HepG2 (cell line): ENCODE measurements at regions of chr17 and their contacts with region 1.

Region 1: GRCh38 chr17:17859909-17860765 is 23.4 kb upstream of the SREBF1 start:
- DNase-seq: peak; percentile 57
- ATAC-seq: peak; percentile 88
- H3K4me3 ChIP-seq: no peak overlapping the region
- H3K27ac ChIP-seq: no peak overlapping the region
- H3K4me1 ChIP-seq: peaks cover 44% of the 10 kb centered on the region
- H3K27me3 ChIP-seq: no peaks in the 10 kb centered on the region
- CTCF ChIP-seq: peak; percentile 99
- EP300 ChIP-seq: no peak
- POLR2A ChIP-seq: no peak
- RAD21 ChIP-seq: peak; percentile 96

Region 2: GRCh38 chr17:17712268-17712924 is 147.7 kb before region 1 on chr17:
- CTCF ChIA-PET with region 1: no interaction called
- POLR2A ChIA-PET with region 1: no interaction called
- in situ Hi-C with region 1: no loop called
- intact Hi-C with region 1: loop called (anchors 10 kb)
- DNase-seq: no peak
- ATAC-seq: no peak
- H3K4me3 ChIP-seq: no peak overlapping the region
- H3K27ac ChIP-seq: peak overlapping the region; percentile 61
- H3K4me1 ChIP-seq: peaks cover 94% of the 10 kb centered on the region
- H3K27me3 ChIP-seq: no peaks in the 10 kb centered on the region
- CTCF ChIP-seq: no peak
- EP300 ChIP-seq: no peak
- POLR2A ChIP-seq: no peak
- RAD21 ChIP-seq: no peak

Region 3: GRCh38 chr17:17812211-17813057 is 47.7 kb before region 1 on chr17:
- CTCF ChIA-PET with region 1: interaction called, 53 read pairs
- POLR2A ChIA-PET with region 1: interaction called, 4 read pairs
- in situ Hi-C with region 1: loop called (anchors 5 kb)
- intact Hi-C with region 1: loop called (anchors 1 kb)
- DNase-seq: peak; percentile 52
- ATAC-seq: peak; percentile 50
- H3K4me3 ChIP-seq: no peak overlapping the region
- H3K27ac ChIP-seq: peak overlapping the region; percentile 58
- H3K4me1 ChIP-seq: peaks cover 28% of the 10 kb centered on the region
- H3K27me3 ChIP-seq: no peaks in the 10 kb centered on the region
- CTCF ChIP-seq: peak; percentile 98
- EP300 ChIP-seq: no peak
- POLR2A ChIP-seq: peak; percentile 16 to 29; a peak in 1 of 4 replicates
- RAD21 ChIP-seq: peak; percentile 95

Region 4: DNA sequence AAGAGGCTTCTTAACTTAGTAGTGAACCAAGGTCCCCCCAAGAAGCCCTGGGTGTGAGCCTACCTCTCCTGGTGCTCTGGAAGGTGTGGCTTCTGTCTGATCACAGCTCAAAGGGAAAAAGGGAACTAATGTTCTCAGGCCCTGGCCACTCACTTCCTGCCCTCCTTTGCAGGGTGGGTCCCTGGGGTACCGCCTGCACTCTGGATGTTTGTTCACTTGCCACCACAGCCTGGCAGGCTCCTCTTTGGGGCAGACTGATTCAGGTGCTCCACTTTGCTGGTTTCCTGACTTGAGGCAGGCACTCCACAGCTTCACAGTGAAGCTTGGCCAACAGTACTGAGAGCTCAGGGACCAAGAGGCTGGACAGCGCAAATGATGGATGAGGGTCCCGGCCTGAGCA is 242.5 kb after region 1 on chr17:
- CTCF ChIA-PET with region 1: no interaction called
- POLR2A ChIA-PET with region 1: no interaction called
- in situ Hi-C with region 1: no loop called
- intact Hi-C with region 1: no loop called
- DNase-seq: no peak
- ATAC-seq: no peak
- H3K4me3 ChIP-seq: no peak overlapping the region
- H3K27ac ChIP-seq: no peak overlapping the region
- H3K4me1 ChIP-seq: no peaks in the 10 kb centered on the region
- H3K27me3 ChIP-seq: no peaks in the 10 kb centered on the region
- CTCF ChIP-seq: no peak
- EP300 ChIP-seq: no peak
- POLR2A ChIP-seq: no peak
- RAD21 ChIP-seq: no peak